IMR-90 (cell line): ENCODE measurements at regions of chr15 and their contacts with region 1.

Region 1: GRCh38 chr15:73964736-73965093 is 27.4 kb downstream of the STOML1 start:
- DNase-seq: peak; percentile 72
- ATAC-seq: peak; percentile 91
- H3K4me3 ChIP-seq: no peak overlapping the region
- H3K27ac ChIP-seq: no peak overlapping the region; the same call in 1 of the 2 replicates
- H3K4me1 ChIP-seq: peaks cover 10% of the 10 kb centered on the region
- H3K27me3 ChIP-seq: no peaks in the 10 kb centered on the region
- CTCF ChIP-seq: peak; percentile 98
- POLR2A ChIP-seq: no peak
- RAD21 ChIP-seq: peak; percentile 80

Region 2: DNA sequence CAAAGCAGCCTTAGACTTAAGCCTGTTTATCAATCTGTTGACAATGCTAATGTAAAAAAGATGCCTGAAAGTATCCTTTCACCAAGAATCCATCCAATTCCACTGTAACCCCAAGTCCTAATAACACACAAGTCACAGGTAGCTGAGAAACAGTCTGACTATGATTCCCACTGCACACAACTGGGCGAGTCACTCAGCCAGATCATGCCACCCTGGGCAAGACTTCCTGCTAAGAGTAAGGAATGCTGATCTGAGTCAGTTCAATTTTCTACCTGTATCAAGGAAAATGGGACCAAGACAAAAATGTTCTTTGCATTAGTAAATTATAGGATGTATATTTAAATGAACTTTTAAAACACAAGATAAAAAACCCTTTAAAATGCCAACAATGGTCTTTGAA is 364.8 kb before region 1 on chr15:
- CTCF ChIA-PET with region 1: no interaction called
- POLR2A ChIA-PET with region 1: interaction called, 10 read pairs
- dilution Hi-C with region 1: no loop called
- in situ Hi-C with region 1: no loop called
- intact Hi-C with region 1: no loop called
- DNase-seq: peak; percentile 45
- ATAC-seq: no peak
- H3K4me3 ChIP-seq: no peak overlapping the region
- H3K27ac ChIP-seq: no peak overlapping the region
- H3K4me1 ChIP-seq: peaks cover 31% of the 10 kb centered on the region
- H3K27me3 ChIP-seq: no peaks in the 10 kb centered on the region
- CTCF ChIP-seq: no peak
- POLR2A ChIP-seq: no peak
- RAD21 ChIP-seq: no peak

Region 3: GRCh38 chr15:73862276-73862675 is 102.4 kb before region 1 on chr15:
- CTCF ChIA-PET with region 1: no interaction called
- POLR2A ChIA-PET with region 1: no interaction called
- dilution Hi-C with region 1: no loop called
- in situ Hi-C with region 1: no loop called
- intact Hi-C with region 1: no loop called
- DNase-seq: no peak
- ATAC-seq: no peak
- H3K4me3 ChIP-seq: no peak overlapping the region
- H3K27ac ChIP-seq: no peak overlapping the region
- H3K4me1 ChIP-seq: no peaks in the 10 kb centered on the region
- H3K27me3 ChIP-seq: peaks cover 55% of the 10 kb centered on the region
- CTCF ChIP-seq: no peak
- POLR2A ChIP-seq: no peak
- RAD21 ChIP-seq: no peak

Region 4: DNA sequence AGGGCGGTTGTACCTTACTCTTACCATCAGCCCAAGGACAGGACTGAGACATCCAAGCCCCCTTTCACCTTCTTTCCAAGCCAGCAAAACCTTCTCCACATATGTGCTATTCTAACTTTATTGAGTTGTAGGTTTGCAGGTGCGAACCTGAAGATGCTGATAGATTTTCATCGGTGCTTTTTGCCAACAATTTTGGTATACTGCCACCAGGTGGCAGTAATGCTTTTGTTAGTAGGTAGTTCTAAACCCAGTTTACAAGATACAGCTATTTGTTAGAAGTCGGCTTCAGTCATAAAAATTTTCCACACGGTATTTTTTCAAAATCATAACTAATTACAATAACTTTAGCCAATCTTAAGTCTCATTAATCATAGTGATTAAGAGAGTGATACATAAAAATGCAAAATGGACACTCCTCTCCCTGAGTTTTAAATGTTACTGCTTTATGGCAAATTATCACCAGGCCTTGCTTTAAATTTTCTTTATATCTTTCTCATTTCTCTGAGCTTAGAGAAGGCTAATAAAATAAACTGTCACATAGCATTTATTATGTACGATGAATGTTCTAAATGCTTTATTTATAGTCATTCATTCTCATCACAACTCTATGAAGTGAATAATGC is 90.7 kb before region 1 on chr15:
- CTCF ChIA-PET with region 1: no interaction called
- POLR2A ChIA-PET with region 1: no interaction called
- dilution Hi-C with region 1: no loop called
- in situ Hi-C with region 1: no loop called
- intact Hi-C with region 1: loop called (anchors 2 kb)
- DNase-seq: peak; percentile 68
- ATAC-seq: 0 out of 2 replicates have a peak, but pooled peaks have one; percentile 27
- H3K4me3 ChIP-seq: no peak overlapping the region
- H3K27ac ChIP-seq: no peak overlapping the region
- H3K4me1 ChIP-seq: no peaks in the 10 kb centered on the region
- H3K27me3 ChIP-seq: peaks cover 53% of the 10 kb centered on the region
- CTCF ChIP-seq: peak; percentile 78
- POLR2A ChIP-seq: no peak
- RAD21 ChIP-seq: peak; percentile 75

Region 5: DNA sequence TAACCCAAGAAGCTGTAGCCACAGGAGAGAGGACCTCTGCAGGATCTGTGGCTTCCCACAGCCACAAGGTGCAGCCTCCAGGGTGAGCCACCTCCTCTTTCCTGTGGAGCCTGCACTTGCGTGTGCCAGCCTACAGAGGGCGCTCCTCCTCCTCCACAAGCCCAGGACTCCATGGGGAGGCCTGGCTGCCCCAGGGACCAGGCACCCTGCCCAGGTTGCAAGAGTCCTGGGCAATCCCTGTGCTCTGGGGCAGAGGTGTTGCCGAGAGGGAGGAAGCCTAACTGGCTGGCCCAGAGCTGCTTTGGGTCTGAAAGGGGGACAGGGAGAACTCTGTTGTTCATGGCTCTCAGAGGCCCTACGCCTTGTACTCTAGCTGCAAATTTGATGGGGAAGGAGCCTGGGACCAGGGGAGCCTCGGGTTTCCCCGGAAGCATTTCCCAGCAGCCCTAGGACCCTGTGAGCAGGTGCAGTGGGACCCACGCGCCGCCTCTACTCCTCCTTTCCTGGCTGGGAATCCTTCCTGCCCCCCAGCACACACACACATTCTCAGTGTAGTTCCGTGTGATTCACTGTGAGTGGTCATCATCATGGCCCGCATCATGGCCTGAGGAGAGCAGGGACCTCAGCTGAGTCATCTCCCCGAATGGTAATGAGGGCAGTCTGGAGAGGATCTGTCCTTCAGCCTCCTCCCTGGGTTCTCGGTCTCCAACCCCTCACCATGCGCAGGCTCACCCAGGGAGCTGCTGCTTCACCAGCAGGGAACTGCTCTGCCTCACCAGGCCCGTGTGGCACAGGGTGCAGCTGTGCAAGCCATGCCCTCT is 67.1 kb before region 1 on chr15:
- CTCF ChIA-PET with region 1: no interaction called
- POLR2A ChIA-PET with region 1: no interaction called
- dilution Hi-C with region 1: no loop called
- in situ Hi-C with region 1: no loop called
- intact Hi-C with region 1: loop called (anchors 1 kb)
- DNase-seq: peak; percentile 96
- ATAC-seq: peak; percentile 96
- H3K4me3 ChIP-seq: no peak overlapping the region
- H3K27ac ChIP-seq: peak overlapping the region; percentile 44; the same call in 1 of the 2 replicates
- H3K4me1 ChIP-seq: peaks cover 6% of the 10 kb centered on the region
- H3K27me3 ChIP-seq: peaks cover 5% of the 10 kb centered on the region
- CTCF ChIP-seq: peak; percentile 97
- POLR2A ChIP-seq: no peak
- RAD21 ChIP-seq: peak; percentile 79

Region 6: DNA sequence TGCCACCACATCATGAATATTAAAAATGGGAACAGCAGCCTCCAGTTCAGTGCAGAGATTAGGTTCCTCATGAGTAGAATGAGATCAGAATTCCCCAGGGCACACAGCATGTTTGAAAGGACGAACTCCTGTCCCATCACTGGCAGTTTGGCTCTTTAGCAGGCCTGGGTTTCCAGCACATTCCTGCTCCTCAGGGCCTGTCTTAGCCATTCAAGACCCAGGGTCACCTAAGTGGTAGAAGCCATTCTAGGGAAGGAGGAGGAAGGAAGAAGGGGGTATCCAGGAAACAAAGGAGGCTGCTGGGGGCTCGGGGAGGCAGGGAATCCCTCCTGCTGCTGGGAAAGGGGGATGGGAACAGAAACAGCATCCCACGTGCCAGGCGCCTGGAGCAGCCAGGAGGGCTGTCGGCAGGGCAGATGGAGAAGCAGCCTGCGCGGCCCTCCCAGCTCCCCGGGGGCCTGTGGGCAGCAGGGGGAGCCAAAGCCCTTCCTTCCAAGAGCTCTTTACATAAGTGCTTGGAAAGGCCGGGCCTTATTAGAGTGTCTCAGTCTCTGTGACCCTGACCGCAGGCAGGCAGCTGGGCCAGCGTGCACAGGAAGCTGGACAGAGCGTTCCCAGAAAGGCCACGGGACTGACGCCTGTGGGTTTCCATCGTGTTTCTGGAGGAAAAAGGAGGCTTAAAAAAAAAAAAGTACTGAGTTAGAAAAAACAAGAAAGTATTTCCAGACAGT is 13.7 kb before region 1 on chr15:
- CTCF ChIA-PET with region 1: interaction called, 13 read pairs
- POLR2A ChIA-PET with region 1: no interaction called
- dilution Hi-C with region 1: no loop called
- in situ Hi-C with region 1: no loop called
- intact Hi-C with region 1: loop called (anchors 1 kb)
- DNase-seq: peak; percentile 97
- ATAC-seq: peak; percentile 97
- H3K4me3 ChIP-seq: no peak overlapping the region
- H3K27ac ChIP-seq: peak overlapping the region; percentile 79
- H3K4me1 ChIP-seq: peaks cover 13% of the 10 kb centered on the region
- H3K27me3 ChIP-seq: no peaks in the 10 kb centered on the region
- CTCF ChIP-seq: peak; percentile 96
- POLR2A ChIP-seq: no peak
- RAD21 ChIP-seq: peak; percentile 90

Region 7: DNA sequence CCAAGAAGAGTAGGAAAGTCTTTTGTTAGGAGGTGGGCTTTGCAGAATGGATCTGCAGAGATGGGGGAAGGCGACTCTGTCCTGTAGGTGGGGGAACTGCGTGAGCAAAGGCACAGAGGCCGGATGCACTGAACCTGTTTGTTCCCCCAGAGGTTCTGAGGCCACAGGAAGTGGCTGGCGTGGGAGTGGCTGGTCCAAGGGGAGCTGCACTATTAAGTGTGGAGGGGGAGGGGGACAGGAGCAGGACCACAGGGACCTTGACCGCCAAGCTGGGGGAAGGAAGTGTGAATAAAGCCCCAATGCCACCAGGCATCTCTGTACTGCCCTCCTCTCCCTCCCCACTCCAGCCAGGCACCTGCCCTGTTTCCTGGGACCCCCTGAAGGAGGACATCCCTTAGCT is 350.9 kb after region 1 on chr15:
- CTCF ChIA-PET with region 1: no interaction called
- POLR2A ChIA-PET with region 1: no interaction called
- dilution Hi-C with region 1: no loop called
- in situ Hi-C with region 1: no loop called
- intact Hi-C with region 1: no loop called
- DNase-seq: no peak
- ATAC-seq: no peak
- H3K4me3 ChIP-seq: no peak overlapping the region
- H3K27ac ChIP-seq: no peak overlapping the region
- H3K4me1 ChIP-seq: peaks cover 15% of the 10 kb centered on the region; the same call in 1 of the 2 replicates
- H3K27me3 ChIP-seq: peaks cover 23% of the 10 kb centered on the region
- CTCF ChIP-seq: no peak
- POLR2A ChIP-seq: no peak
- RAD21 ChIP-seq: no peak